A549 (cell line): ENCODE measurements at regions of chr2 and their contacts with region 1.

Region 1: GRCh38 chr2:192162392-192163042 is 32.2 kb downstream of the TMEFF2 start:
- DNase-seq: peak; percentile 4 to 64
- ATAC-seq: peak; percentile 87 to 93; a peak in 5 of 6 replicates
- H3K4me3 ChIP-seq: no peak overlapping the region
- H3K27ac ChIP-seq: peak overlapping the region; percentile 1 to 21; a peak in 2 of 6 replicates
- H3K4me1 ChIP-seq: peaks cover 5% of the 10 kb centered on the region; the same call in 1 of the 3 replicates
- CTCF ChIP-seq: peak; percentile 97
- EP300 ChIP-seq: no peak
- POLR2A ChIP-seq: no peak
- RAD21 ChIP-seq: peak; percentile 97

Region 2: GRCh38 chr2:191555092-191555742 is 607.3 kb before region 1 on chr2:
- CTCF ChIA-PET with region 1: interaction called, 49 read pairs
- POLR2A ChIA-PET with region 1: no interaction called
- DNase-seq: peak; percentile 60 to 76
- ATAC-seq: peak; percentile 95 to 97
- H3K4me3 ChIP-seq: no peak overlapping the region
- H3K27ac ChIP-seq: peak overlapping the region; percentile 7 to 36; a peak in 2 of 6 replicates
- H3K4me1 ChIP-seq: peaks cover 11% of the 10 kb centered on the region; the same call in 1 of the 3 replicates
- CTCF ChIP-seq: peak; percentile 89
- EP300 ChIP-seq: no peak
- POLR2A ChIP-seq: no peak
- RAD21 ChIP-seq: peak; percentile 91 to 95

Region 3: GRCh38 chr2:191566344-191566743 is 596.2 kb before region 1 on chr2:
- CTCF ChIA-PET with region 1: interaction called, 16 read pairs
- POLR2A ChIA-PET with region 1: no interaction called
- DNase-seq: peak; percentile 61 to 67
- ATAC-seq: peak; percentile 82 to 92
- H3K4me3 ChIP-seq: no peak overlapping the region
- H3K27ac ChIP-seq: peak overlapping the region in 1 of 2 experiments; percentile 49; a peak in 2 of 6 replicates
- H3K4me1 ChIP-seq: peaks cover 7% of the 10 kb centered on the region
- CTCF ChIP-seq: peak; percentile 89
- EP300 ChIP-seq: no peak
- POLR2A ChIP-seq: no peak
- RAD21 ChIP-seq: peak; percentile 84 to 85

Region 4: GRCh38 chr2:191806396-191806795 is 356.1 kb before region 1 on chr2:
- CTCF ChIA-PET with region 1: interaction called, 227 read pairs
- POLR2A ChIA-PET with region 1: no interaction called
- DNase-seq: no peak
- ATAC-seq: no peak
- H3K4me3 ChIP-seq: no peak overlapping the region
- H3K27ac ChIP-seq: no peak overlapping the region
- H3K4me1 ChIP-seq: no peaks in the 10 kb centered on the region
- CTCF ChIP-seq: no peak
- EP300 ChIP-seq: no peak
- POLR2A ChIP-seq: no peak
- RAD21 ChIP-seq: no peak

Region 5: DNA sequence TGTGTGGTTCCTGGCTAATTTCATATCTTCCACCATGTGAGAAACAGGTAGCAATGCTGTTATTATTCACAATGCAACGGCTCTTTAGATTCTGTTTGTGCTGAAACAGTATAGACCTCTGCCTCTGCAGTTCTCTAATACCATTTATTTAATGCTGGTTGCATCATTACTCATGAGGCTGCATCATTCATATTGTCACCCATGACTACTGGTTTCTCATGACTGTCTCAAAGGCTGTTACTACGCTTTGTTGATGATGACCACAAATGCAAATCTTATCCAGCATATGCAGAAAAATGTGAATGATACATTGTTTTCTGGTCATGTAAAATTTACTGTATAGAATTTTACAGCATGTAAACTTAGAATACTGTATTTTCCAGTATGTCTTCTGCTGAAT is 338.1 kb before region 1 on chr2:
- CTCF ChIA-PET with region 1: interaction called, 227 read pairs
- POLR2A ChIA-PET with region 1: no interaction called
- DNase-seq: no peak
- ATAC-seq: no peak
- H3K4me3 ChIP-seq: no peak overlapping the region
- H3K27ac ChIP-seq: no peak overlapping the region
- H3K4me1 ChIP-seq: no peaks in the 10 kb centered on the region
- CTCF ChIP-seq: no peak
- EP300 ChIP-seq: no peak
- POLR2A ChIP-seq: no peak
- RAD21 ChIP-seq: no peak

Region 6: DNA sequence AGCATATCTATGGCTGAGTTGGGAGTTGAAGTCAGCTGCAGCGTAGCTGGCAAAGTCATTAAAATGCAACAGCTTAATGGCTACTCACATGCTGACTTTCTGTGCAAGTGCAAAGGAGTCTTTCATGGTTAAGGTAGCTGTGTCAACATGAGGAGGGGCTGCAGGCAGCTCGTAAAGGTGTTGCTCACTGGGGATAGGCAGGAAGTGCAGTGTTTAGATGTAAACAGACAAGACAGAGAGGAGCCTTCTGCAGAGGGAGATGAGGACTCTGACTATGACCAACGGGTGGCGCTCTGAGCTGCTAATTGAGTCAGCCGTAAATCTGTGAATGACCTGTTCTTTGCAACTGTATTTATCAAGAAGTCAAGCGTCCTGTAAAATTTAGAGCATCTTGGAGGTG is 293.3 kb before region 1 on chr2:
- CTCF ChIA-PET with region 1: interaction called, 35 read pairs
- POLR2A ChIA-PET with region 1: no interaction called
- DNase-seq: peak in 1 of 2 experiments; percentile 75
- ATAC-seq: peak in 1 of 2 experiments; percentile 41; a peak in 2 of 6 replicates
- H3K4me3 ChIP-seq: no peak overlapping the region
- H3K27ac ChIP-seq: peak overlapping the region; percentile 87 to 91
- H3K4me1 ChIP-seq: peaks cover 57% of the 10 kb centered on the region
- CTCF ChIP-seq: no peak
- EP300 ChIP-seq: no peak
- POLR2A ChIP-seq: no peak
- RAD21 ChIP-seq: peak in 1 of 2 experiments; percentile 71; a peak in 2 of 5 replicates

Region 7: GRCh38 chr2:192148620-192149321 is 13.7 kb before region 1 on chr2:
- CTCF ChIA-PET with region 1: interaction called, 12 read pairs
- POLR2A ChIA-PET with region 1: no interaction called
- DNase-seq: no peak
- ATAC-seq: peak; percentile 44 to 50; a peak in 2 of 6 replicates
- H3K4me3 ChIP-seq: no peak overlapping the region
- H3K27ac ChIP-seq: no peak overlapping the region
- H3K4me1 ChIP-seq: peaks cover 15% of the 10 kb centered on the region
- CTCF ChIP-seq: no peak
- EP300 ChIP-seq: no peak
- POLR2A ChIP-seq: no peak
- RAD21 ChIP-seq: no peak